Left ventricle myocardium inferior (tissue), 1 donor: ENCODE measurements at regions of chr1 and their contacts with region 1.

Region 1: DNA sequence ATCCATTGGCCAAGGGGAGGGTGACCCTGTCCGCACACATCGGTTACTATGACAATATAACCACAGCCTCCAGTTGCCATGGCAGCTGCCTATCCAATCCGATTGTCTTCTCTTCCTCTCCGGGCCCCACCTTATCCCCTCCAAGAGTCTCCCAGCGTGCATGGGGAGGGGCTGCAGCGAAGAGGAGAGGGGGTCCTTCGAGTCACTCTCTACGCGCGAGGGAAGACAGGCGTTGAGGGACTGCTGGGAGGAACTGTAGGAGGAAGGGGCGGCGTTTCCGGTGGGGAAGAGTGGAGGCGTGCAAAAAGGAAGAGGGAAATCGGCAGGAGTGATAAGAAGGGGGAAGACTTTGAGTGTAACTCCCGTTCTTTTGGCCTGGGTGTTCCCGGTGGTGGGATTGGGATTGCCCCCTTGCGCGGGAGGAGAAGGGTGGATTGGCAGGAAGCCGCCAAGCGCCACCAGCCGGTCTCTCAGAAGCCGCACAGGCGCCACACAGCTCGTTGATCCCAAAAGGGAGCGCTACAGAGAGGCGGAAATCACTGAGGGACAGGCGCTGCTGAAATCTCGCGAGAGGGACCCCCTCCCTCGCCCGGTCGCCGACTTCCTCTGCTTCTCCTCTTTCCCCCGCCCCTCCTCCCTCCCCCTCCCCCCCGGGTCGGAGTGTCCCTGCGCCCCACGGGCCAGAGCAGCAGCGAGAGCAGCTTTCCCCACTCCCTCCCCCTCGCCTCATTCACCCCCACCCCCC is 384 bp upstream of the SMG7 start:
- DNase-seq: peak; percentile 99
- H3K4me3 ChIP-seq: peak overlapping the region; percentile 98
- H3K27ac ChIP-seq: peak overlapping the region; percentile 99
- H3K4me1 ChIP-seq: peaks cover 61% of the 10 kb centered on the region
- H3K27me3 ChIP-seq: no peaks in the 10 kb centered on the region
- CTCF ChIP-seq: peak; percentile 35

Region 2: DNA sequence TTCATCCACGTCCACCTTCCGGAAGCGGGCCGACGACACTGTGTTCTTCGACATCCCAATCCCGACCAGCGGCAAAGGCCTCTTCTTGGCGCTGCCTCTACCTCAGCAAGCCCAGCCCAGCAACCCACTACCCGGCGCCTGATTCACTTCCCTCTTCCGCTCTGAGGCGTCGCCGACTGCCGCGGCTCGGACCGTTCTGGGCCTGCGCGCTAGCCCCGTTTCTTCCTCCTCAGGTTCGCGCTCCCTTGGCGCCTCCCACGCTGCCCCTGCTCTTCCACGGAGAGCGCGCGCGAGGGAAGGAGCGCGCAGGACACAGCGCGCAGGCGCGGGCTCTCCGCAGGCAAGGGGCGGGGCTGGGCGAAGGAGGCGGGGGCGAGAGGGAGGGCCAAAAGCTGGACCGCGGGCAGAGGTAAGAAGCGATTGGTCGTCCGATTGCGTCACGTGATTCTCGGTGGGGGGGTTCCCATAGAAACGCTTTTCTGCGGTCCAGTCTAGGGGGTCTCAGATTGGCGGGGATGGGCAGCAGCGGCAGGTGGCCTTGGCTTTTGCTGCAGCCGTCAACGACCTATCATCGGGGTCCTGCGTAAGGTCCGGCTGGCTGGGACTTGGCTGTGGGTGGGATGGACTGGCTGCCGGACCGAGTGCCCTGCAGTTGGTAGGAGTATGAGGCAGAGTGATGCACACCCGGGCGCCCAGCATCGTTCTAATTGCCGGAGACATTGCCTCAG is 163.9 kb after region 1 on chr1 and contains the start of gene ARPC5:
- intact Hi-C with region 1: loop called (anchors 10 kb)
- DNase-seq: peak; percentile 96
- H3K4me3 ChIP-seq: peak within 1 kb of the TSS; percentile 86
- H3K27ac ChIP-seq: peak within 1 kb of the TSS; percentile 97
- H3K4me1 ChIP-seq: peaks cover 62% of the 10 kb centered on the region
- H3K27me3 ChIP-seq: no peaks in the 10 kb centered on the region
- CTCF ChIP-seq: no peak
- total RNA-seq, gene ARPC5: 33.6 TPM